GM10248 (cell line): ENCODE measurements at regions of chr19 and their contacts with region 1.

Region 1: GRCh38 chr19:18173054-18173571 is 500 bp upstream of the IFI30 start:
- DNase-seq: peak; percentile 46
- CTCF ChIP-seq: no peak

Region 2: DNA sequence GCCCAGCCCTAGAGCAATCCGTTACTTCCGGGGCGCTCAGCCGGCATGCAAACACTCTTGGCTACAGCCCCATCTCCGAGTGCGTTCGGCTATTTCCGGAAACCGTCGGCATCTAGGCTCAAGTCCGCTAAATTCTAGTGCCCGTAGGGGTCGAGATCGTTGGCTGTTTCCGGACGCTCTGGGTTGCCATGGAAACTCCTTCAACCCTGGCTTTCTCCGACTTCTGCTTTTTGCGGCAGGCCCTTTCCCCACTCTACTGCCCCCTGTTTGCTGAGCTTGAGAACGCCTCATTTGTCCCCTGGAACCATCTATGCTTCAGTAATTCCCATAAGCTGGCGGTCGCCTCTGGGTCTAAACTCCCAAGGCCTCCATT is 20.7 kb before region 1 on chr19:
- CTCF ChIA-PET with region 1: interaction called, 14 read pairs
- POLR2A ChIA-PET with region 1: no interaction called
- DNase-seq: peak; percentile 100
- CTCF ChIP-seq: peak; percentile 55

Region 3: GRCh38 chr19:18160971-18161635 is 12.0 kb before region 1 on chr19:
- CTCF ChIA-PET with region 1: interaction called, 29 read pairs
- POLR2A ChIA-PET with region 1: no interaction called
- DNase-seq: peak; percentile 94
- CTCF ChIP-seq: peak; percentile 100